PC-9 (cell line): ENCODE measurements at regions of chr6 and their contacts with region 1.

Region 1: GRCh38 chr6:19804205-19805123 is 32.7 kb upstream of the ID4 start:
- DNase-seq: peak; percentile 77 to 97
- H3K4me3 ChIP-seq: peak overlapping the region; percentile 88
- H3K27ac ChIP-seq: no peak overlapping the region
- H3K4me1 ChIP-seq: peaks cover 10% of the 10 kb centered on the region; the same call in 1 of the 2 replicates
- H3K27me3 ChIP-seq: no peaks in the 10 kb centered on the region
- CTCF ChIP-seq: no peak

Region 2: GRCh38 chr6:19210849-19211590 is 593.4 kb before region 1 on chr6:
- CTCF ChIA-PET with region 1: no interaction called
- POLR2A ChIA-PET with region 1: no interaction called
- intact Hi-C with region 1: no loop called
- DNase-seq: no peak
- H3K4me3 ChIP-seq: no peak overlapping the region
- H3K27ac ChIP-seq: no peak overlapping the region
- H3K4me1 ChIP-seq: peaks cover 12% of the 10 kb centered on the region
- H3K27me3 ChIP-seq: no peaks in the 10 kb centered on the region
- CTCF ChIP-seq: 0 out of 2 replicates have a peak, but pooled peaks have one; percentile 22

Region 3: DNA sequence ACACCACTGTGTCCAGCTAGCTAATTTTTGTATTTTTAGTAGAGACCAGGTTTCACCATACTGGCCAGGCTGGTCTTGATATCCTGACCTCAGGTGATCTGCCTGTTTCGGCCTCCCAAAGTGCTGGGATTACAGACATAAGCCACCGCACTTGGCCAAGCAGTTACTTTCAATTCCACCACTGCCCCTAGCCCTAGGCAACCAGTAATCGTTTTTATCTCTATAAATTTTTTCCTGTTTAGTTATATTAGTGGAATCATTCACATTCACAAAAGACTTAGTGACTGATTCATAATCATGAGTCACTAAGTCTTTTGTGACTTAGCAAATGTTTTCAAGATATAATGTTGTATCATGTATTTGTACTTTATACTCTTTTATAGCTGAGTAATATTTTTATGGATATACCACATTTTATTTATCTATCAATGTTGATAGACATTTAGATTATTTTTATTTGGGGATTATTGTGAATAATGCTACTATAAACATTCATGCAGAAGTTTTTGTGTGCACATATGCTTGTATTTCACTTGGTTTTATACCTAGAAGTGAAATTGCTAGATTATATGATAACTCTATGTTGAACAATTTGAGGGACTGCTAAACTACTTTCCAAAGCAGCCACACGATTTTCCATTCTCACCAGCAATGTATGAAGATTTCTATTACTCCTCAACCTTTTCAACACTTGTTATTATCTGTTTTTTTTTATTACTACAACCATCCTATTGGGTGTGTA is 388.7 kb before region 1 on chr6:
- CTCF ChIA-PET with region 1: no interaction called
- POLR2A ChIA-PET with region 1: interaction called, 3 read pairs
- intact Hi-C with region 1: loop called (anchors 5 kb)
- DNase-seq: peak; percentile 60 to 94
- H3K4me3 ChIP-seq: peak overlapping the region; percentile 16; the same call in 1 of the 2 replicates
- H3K27ac ChIP-seq: peak overlapping the region; percentile 91
- H3K4me1 ChIP-seq: peaks cover 57% of the 10 kb centered on the region
- H3K27me3 ChIP-seq: no peaks in the 10 kb centered on the region
- CTCF ChIP-seq: no peak

Region 4: DNA sequence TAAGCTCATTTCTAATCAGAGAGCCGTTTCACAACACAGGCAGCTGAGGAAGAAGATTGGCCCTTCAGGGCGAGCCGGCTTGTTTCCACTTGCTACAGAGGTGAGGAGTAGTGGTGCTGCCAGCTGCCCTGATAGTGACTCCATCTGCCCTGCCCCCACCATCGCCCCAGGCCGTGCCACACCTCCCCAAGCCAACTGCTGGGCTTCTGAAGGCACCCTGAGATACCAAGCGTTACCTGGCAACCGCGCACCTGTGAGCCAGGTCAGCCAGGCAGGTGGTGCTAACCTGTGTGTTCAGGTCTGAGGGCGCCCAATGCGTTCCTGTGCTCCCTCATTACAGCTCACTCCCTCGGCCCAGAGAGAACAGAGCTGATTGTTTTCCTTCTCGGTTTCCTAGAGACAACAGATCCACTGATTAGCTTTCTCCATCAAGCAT is 266.4 kb before region 1 on chr6:
- CTCF ChIA-PET with region 1: no interaction called
- POLR2A ChIA-PET with region 1: no interaction called
- intact Hi-C with region 1: loop called (anchors 1 kb)
- DNase-seq: peak; percentile 96 to 99
- H3K4me3 ChIP-seq: no peak overlapping the region
- H3K27ac ChIP-seq: no peak overlapping the region
- H3K4me1 ChIP-seq: peaks cover 24% of the 10 kb centered on the region
- H3K27me3 ChIP-seq: no peaks in the 10 kb centered on the region
- CTCF ChIP-seq: no peak

Region 5: GRCh38 chr6:19664878-19665612 is 139.4 kb before region 1 on chr6:
- CTCF ChIA-PET with region 1: no interaction called
- POLR2A ChIA-PET with region 1: no interaction called
- intact Hi-C with region 1: loop called (anchors 5 kb)
- DNase-seq: no peak
- H3K4me3 ChIP-seq: no peak overlapping the region
- H3K27ac ChIP-seq: no peak overlapping the region
- H3K4me1 ChIP-seq: no peaks in the 10 kb centered on the region
- H3K27me3 ChIP-seq: no peaks in the 10 kb centered on the region
- CTCF ChIP-seq: no peak

Region 6: GRCh38 chr6:19759117-19759880 is 45.2 kb before region 1 on chr6:
- CTCF ChIA-PET with region 1: no interaction called
- POLR2A ChIA-PET with region 1: interaction called, 11 read pairs
- intact Hi-C with region 1: loop called (anchors 1 kb)
- DNase-seq: peak; percentile 14 to 46
- H3K4me3 ChIP-seq: no peak overlapping the region
- H3K27ac ChIP-seq: no peak overlapping the region
- H3K4me1 ChIP-seq: peaks cover 11% of the 10 kb centered on the region; the same call in 1 of the 2 replicates
- H3K27me3 ChIP-seq: no peaks in the 10 kb centered on the region
- CTCF ChIP-seq: no peak

Region 7: DNA sequence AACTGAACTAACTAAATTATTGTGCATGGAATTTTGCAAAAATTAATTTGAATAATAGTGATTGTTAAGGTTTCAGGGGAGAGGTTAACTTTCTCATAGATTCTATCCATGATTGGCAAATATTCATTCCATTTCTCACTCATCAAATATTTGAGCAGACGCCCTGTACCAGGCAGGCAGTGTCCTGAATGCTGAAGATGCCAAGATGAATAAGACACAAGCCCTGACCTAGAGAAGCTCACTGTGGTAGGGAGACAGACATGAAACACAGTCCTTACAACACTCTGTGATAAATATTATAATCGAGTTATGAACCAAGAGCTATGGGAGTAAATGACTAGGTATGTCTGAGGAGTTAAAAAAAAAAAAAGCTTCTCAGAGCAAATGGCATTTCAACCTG is 14.3 kb after region 1 on chr6:
- CTCF ChIA-PET with region 1: no interaction called
- POLR2A ChIA-PET with region 1: no interaction called
- intact Hi-C with region 1: no loop called
- DNase-seq: no peak
- H3K4me3 ChIP-seq: no peak overlapping the region
- H3K27ac ChIP-seq: no peak overlapping the region
- H3K4me1 ChIP-seq: no peaks in the 10 kb centered on the region
- H3K27me3 ChIP-seq: no peaks in the 10 kb centered on the region
- CTCF ChIP-seq: no peak

Region 8: GRCh38 chr6:19836799-19837510 is 32.5 kb after region 1 on chr6 and contains the start of gene ID4:
- CTCF ChIA-PET with region 1: no interaction called
- POLR2A ChIA-PET with region 1: interaction called, 5 read pairs
- intact Hi-C with region 1: loop called (anchors 2 kb)
- DNase-seq: peak in 1 of 2 experiments; percentile 83
- H3K4me3 ChIP-seq: peak within 1 kb of the TSS; percentile 66
- H3K27ac ChIP-seq: no peak within 1 kb of the TSS
- H3K4me1 ChIP-seq: peaks cover 13% of the 10 kb centered on the region
- H3K27me3 ChIP-seq: peaks cover 17% of the 10 kb centered on the region
- CTCF ChIP-seq: no peak
- total RNA-seq, gene ID4: 4.4 and 5.9 TPM in 2 replicates

Region 9: DNA sequence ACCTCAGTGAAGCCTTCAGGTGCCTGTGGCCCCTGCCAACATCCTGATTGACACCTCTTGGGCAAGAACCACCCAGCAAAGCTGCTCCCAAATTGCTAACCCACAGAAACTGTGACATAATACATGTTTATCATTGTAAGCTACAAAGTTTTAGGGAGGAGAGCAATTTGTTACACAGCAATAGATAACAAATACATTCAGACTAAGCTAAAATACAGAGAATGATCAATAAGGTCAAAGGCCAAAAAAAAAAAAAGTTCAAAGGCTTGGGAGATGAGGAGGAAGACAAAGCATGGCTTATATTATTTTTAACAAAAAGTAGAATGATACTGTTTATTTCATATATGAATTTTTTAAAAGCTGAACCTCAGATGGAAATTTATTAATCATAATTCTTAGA is 138.6 kb after region 1 on chr6:
- CTCF ChIA-PET with region 1: no interaction called
- POLR2A ChIA-PET with region 1: no interaction called
- intact Hi-C with region 1: no loop called
- DNase-seq: no peak
- H3K4me3 ChIP-seq: no peak overlapping the region
- H3K27ac ChIP-seq: no peak overlapping the region
- H3K4me1 ChIP-seq: no peaks in the 10 kb centered on the region
- H3K27me3 ChIP-seq: 0 out of 2 replicates have a peak, but pooled peaks cover 3% of the 10 kb centered on the region
- CTCF ChIP-seq: no peak

Region 10: GRCh38 chr6:20220359-20220758 is 415.9 kb after region 1 on chr6:
- CTCF ChIA-PET with region 1: no interaction called
- POLR2A ChIA-PET with region 1: interaction called, 20 read pairs
- intact Hi-C with region 1: no loop called
- DNase-seq: no peak
- H3K4me3 ChIP-seq: no peak overlapping the region
- H3K27ac ChIP-seq: no peak overlapping the region
- H3K4me1 ChIP-seq: no peaks in the 10 kb centered on the region
- H3K27me3 ChIP-seq: no peaks in the 10 kb centered on the region
- CTCF ChIP-seq: no peak